Dendritic cell treated with granulocyte-macrophage colony-stimulating factor and Interleukin-4, amounts not matched to agents 40 ng/mL and 50 ng/mL, for 4 days (primary cell): ENCODE measurements at regions of chr19 and their contacts with region 1.

Region 1: GRCh38 chr19:947265-948036 is 21.6 kb downstream of the ARID3A start:
- H3K4me3 Mint-ChIP-seq: peak overlapping the region; percentile 79
- H3K27ac Mint-ChIP-seq: peak overlapping the region; percentile 98
- H3K4me1 Mint-ChIP-seq: peaks cover 90% of the 10 kb centered on the region
- H3K27me3 Mint-ChIP-seq: no peaks in the 10 kb centered on the region

Region 2: DNA sequence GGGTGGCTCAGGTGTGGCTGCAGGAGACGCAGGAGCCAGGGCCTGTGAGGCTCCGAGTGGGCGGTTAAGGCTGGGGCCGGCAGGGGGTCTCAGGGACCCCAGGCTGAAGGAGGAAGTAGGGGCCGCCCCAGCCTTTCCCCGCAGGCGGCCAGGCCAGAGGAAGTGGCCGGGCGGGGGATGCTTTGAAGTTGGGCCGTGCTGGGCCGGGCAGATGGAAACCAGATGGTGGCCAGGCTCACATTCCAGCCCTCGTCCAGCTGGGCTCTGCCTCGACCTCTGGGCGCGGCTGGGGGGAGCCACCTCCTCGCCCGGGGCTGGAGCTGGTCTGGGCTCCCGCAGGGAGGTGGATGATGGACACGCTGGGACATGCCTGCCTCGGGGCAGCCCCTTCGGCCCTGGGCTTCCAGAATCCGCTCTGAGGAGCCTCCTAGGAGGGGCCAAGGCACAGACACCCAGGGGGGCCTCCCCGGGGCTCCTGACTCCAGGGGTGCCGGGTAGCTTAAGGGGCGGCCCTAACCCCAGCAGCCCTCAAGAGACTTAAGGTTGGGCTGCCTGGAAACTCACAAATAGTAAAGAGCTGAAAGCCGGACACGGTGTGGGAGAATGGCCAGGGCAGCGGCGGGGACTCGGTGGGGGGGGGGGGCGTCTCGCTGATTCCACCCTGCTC is 14.1 kb before region 1 on chr19:
- intact Hi-C with region 1: loop called (anchors 2 kb)
- H3K4me3 Mint-ChIP-seq: peak overlapping the region; percentile 72
- H3K27ac Mint-ChIP-seq: peak overlapping the region; percentile 93
- H3K4me1 Mint-ChIP-seq: peaks cover 92% of the 10 kb centered on the region
- H3K27me3 Mint-ChIP-seq: no peaks in the 10 kb centered on the region

Region 3: GRCh38 chr19:1747285-1748114 is 800.0 kb after region 1 on chr19:
- intact Hi-C with region 1: no loop called
- H3K4me3 Mint-ChIP-seq: peak overlapping the region; percentile 34
- H3K27ac Mint-ChIP-seq: no peak overlapping the region
- H3K4me1 Mint-ChIP-seq: peaks cover 12% of the 10 kb centered on the region
- H3K27me3 Mint-ChIP-seq: peaks cover 90% of the 10 kb centered on the region